ENCODE measurements at regions of chr6 and their contacts with region 1.

Region 1: GRCh38 chr6:87837444-87837843 is 135.4 kb upstream of the AKIRIN2 start:
- DNase-seq: no peak
- ATAC-seq: no peak
- H3K4me3 ChIP-seq: no peak overlapping the region
- H3K27ac ChIP-seq: no peak overlapping the region
- H3K4me1 ChIP-seq: peaks cover 4% of the 10 kb centered on the region
- H3K27me3 ChIP-seq: no peaks in the 10 kb centered on the region
- CTCF ChIP-seq: no peak
- EP300 ChIP-seq: no peak
- POLR2A ChIP-seq: no peak
- RAD21 ChIP-seq: no peak

Region 2: GRCh38 chr6:87848574-87848973 is 11.1 kb after region 1 on chr6:
- CTCF ChIA-PET with region 1: interaction called, 16 read pairs
- POLR2A ChIA-PET with region 1: no interaction called
- RAD21 ChIA-PET with region 1: interaction called, 14 read pairs
- SMC1A ChIA-PET with region 1: interaction called, 14 read pairs
- in situ Hi-C with region 1: no loop called
- intact Hi-C with region 1: no loop called
- DNase-seq: no peak
- ATAC-seq: no peak
- H3K4me3 ChIP-seq: no peak overlapping the region
- H3K27ac ChIP-seq: no peak overlapping the region
- H3K4me1 ChIP-seq: no peaks in the 10 kb centered on the region
- H3K27me3 ChIP-seq: no peaks in the 10 kb centered on the region
- CTCF ChIP-seq: no peak
- EP300 ChIP-seq: no peak
- POLR2A ChIP-seq: no peak
- RAD21 ChIP-seq: no peak